PC-3 (cell line): ENCODE measurements at regions of chr2 and their contacts with region 1.

Region 1: GRCh38 chr2:20661067-20661980 is 5.6 kb upstream of the GDF7 start:
- DNase-seq: peak; percentile 86
- ATAC-seq: peak; percentile 87
- H3K4me3 ChIP-seq: no peak overlapping the region
- H3K27ac ChIP-seq: no peak overlapping the region
- H3K4me1 ChIP-seq: peaks cover 10% of the 10 kb centered on the region
- H3K27me3 ChIP-seq: peaks cover 29% of the 10 kb centered on the region
- CTCF ChIP-seq: peak; percentile 96

Region 2: DNA sequence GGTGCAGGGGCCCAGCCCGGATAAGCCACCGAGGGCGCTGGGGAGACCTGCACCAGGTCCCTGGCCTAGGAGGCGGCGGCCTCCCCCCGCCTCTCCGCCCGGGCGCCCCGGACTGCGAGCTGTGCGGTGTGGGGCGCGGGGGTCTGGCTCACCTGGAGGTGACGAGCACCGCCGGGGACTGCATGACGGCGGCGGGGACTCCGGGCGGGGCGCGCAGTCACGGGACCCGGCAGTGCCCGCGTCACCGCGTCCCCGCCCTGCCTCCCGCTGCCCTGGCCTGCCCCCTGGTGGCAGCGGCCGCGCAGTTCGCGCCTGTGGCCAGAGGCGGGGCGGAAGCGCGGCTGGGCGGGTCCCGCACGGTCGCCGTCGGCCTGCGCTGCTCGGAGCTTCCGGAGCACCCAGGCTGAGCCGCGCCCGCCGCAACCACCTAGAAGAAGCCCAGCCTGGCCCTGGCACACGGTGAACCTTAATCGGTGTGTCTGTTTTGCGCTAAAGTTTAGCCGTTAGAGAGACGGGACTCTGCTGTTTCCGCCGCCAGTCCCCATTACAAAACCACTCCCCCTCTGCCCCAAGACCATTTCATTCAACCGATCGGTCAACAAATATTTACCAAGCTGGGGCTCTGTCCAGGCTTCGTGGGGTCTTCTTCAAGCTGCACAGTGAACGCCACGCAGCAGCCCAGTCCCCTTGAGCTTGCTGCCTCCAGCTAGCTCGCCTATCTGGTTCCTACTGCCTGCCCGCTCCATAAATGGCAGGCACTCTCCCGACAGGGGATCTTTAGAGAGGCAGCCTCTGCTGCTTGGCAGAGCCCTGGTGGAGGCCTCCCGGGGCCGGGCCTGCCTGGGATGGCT is 10.2 kb before region 1 on chr2 and contains the start of gene HS1BP3:
- CTCF ChIA-PET with region 1: interaction called, 10 read pairs
- POLR2A ChIA-PET with region 1: no interaction called
- intact Hi-C with region 1: no loop called
- DNase-seq: peak; percentile 91
- ATAC-seq: peak; percentile 95
- H3K4me3 ChIP-seq: peak within 1 kb of the TSS; percentile 74
- H3K27ac ChIP-seq: peak within 1 kb of the TSS; percentile 24
- H3K4me1 ChIP-seq: peaks cover 15% of the 10 kb centered on the region
- H3K27me3 ChIP-seq: peaks cover 6% of the 10 kb centered on the region; the same call in 1 of the 2 replicates
- CTCF ChIP-seq: peak; percentile 67
- total RNA-seq, gene HS1BP3: 17.8 and 19.6 TPM in 2 replicates

Region 3: GRCh38 chr2:20675701-20676352 is 14.5 kb after region 1 on chr2:
- CTCF ChIA-PET with region 1: interaction called, 20 read pairs
- POLR2A ChIA-PET with region 1: no interaction called
- intact Hi-C with region 1: no loop called
- DNase-seq: peak; percentile 39
- ATAC-seq: peak; percentile 70
- H3K4me3 ChIP-seq: no peak overlapping the region
- H3K27ac ChIP-seq: no peak overlapping the region
- H3K4me1 ChIP-seq: peaks cover 9% of the 10 kb centered on the region
- H3K27me3 ChIP-seq: peaks cover 23% of the 10 kb centered on the region
- CTCF ChIP-seq: no peak

Region 4: GRCh38 chr2:20755132-20755800 is 93.9 kb after region 1 on chr2:
- CTCF ChIA-PET with region 1: no interaction called
- POLR2A ChIA-PET with region 1: no interaction called
- intact Hi-C with region 1: loop called (anchors 2 kb)
- DNase-seq: no peak
- ATAC-seq: no peak
- H3K4me3 ChIP-seq: no peak overlapping the region
- H3K27ac ChIP-seq: no peak overlapping the region
- H3K4me1 ChIP-seq: no peaks in the 10 kb centered on the region
- H3K27me3 ChIP-seq: peaks cover 22% of the 10 kb centered on the region
- CTCF ChIP-seq: no peak

Region 5: DNA sequence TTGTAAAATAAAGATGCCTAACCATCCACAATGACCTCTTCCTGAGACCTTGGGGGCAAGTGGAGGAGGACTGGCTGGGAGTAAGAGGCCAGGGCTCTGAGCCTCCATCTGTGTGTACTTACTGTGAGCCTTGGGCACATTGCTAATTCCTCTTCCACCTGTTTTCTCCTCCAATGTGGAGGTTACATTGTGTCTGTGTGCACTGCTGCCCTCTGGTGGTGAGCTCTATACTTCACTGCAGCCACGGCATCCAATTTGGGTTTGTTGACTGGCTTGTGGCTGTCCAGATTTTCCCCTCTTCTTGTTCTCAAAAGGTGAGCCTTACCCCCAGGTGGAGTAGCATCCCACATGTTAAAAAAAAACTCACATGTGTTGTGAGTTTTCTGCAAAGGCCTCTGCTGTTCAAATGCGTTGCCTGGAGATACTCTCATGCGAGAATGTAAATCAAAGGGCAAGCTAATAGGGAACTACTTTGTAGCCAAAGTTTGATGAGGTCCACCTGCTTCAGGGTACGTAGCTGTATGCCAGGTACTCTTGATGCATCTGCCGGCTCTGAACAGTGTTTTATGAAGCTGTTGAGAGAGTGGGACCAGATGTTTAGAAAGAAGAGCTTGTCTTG is 301.7 kb after region 1 on chr2:
- CTCF ChIA-PET with region 1: interaction called, 28 read pairs
- POLR2A ChIA-PET with region 1: no interaction called
- intact Hi-C with region 1: no loop called
- DNase-seq: peak; percentile 77
- ATAC-seq: peak; percentile 74
- H3K4me3 ChIP-seq: no peak overlapping the region
- H3K27ac ChIP-seq: no peak overlapping the region
- H3K4me1 ChIP-seq: no peaks in the 10 kb centered on the region
- H3K27me3 ChIP-seq: peaks cover 40% of the 10 kb centered on the region
- CTCF ChIP-seq: peak; percentile 86

Region 6: GRCh38 chr2:21118302-21118920 is 457.1 kb after region 1 on chr2:
- CTCF ChIA-PET with region 1: no interaction called
- POLR2A ChIA-PET with region 1: no interaction called
- intact Hi-C with region 1: loop called (anchors 2 kb)
- DNase-seq: peak; percentile 34
- ATAC-seq: no peak
- H3K4me3 ChIP-seq: no peak overlapping the region
- H3K27ac ChIP-seq: no peak overlapping the region
- H3K4me1 ChIP-seq: no peaks in the 10 kb centered on the region
- H3K27me3 ChIP-seq: no peaks in the 10 kb centered on the region
- CTCF ChIP-seq: peak; percentile 66